ENCODE measurements at regions of chr10 and their contacts with region 1.

Region 1: DNA sequence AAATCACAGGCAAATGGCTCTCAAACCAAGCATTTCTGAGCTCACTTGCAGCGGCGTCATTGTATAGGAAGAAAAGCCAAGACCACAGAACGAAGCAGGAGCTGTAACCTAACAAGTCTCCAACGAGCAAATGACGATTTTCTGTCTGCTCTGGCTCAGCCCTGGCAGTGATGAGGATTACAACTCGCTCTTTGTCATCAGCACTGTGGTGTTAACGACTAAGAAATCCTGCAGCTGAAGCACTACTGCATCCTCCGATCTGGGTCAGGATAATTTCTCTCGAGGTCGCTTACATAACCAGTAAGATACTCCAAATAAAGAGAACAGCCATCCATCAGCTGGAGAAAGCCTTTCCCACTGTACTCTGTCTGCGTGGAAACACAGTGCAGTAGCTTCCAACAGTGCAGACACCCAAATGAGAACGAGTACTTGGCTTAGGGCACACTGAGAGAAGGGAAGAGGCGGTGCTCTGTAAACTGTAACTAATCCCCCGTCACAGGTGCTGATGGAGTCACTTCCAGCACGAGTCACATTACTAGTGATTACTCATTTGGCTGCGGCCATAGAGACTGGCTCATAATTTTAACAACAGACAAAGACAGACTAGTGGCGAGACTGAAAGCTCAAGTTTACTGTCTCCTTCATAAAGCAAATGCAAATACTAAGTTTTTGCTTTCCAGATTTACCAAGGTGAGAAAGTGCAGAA is 135.8 kb downstream of the NRBF2 start:
- DNase-seq: peak; percentile 81
- H3K4me3 Mint-ChIP-seq: peak overlapping the region; percentile 95
- H3K27ac Mint-ChIP-seq: peak overlapping the region; percentile 98
- H3K4me1 Mint-ChIP-seq: peaks cover 31% of the 10 kb centered on the region
- H3K27me3 Mint-ChIP-seq: no peaks in the 10 kb centered on the region

Region 2: GRCh38 chr10:61903221-61903927 is 1365.6 kb before region 1 on chr10:
- intact Hi-C with region 1: loop called (anchors 5 kb)
- DNase-seq: peak; percentile 69
- H3K4me3 Mint-ChIP-seq: peak overlapping the region; percentile 97
- H3K27ac Mint-ChIP-seq: peak overlapping the region; percentile 95
- H3K4me1 Mint-ChIP-seq: peaks cover 60% of the 10 kb centered on the region
- H3K27me3 Mint-ChIP-seq: no peaks in the 10 kb centered on the region

Region 3: GRCh38 chr10:63133056-63133820 is 135.7 kb before region 1 on chr10 and contains the start of gene NRBF2:
- intact Hi-C with region 1: loop called (anchors 1 kb)
- DNase-seq: peak; percentile 97
- H3K4me3 Mint-ChIP-seq: peak within 1 kb of the TSS; percentile 91
- H3K27ac Mint-ChIP-seq: peak within 1 kb of the TSS; percentile 83
- H3K4me1 Mint-ChIP-seq: peaks cover 32% of the 10 kb centered on the region
- H3K27me3 Mint-ChIP-seq: peaks cover 3% of the 10 kb centered on the region
- total RNA-seq, gene NRBF2: 30.0 and 30.8 TPM in 2 replicates

Region 4: DNA sequence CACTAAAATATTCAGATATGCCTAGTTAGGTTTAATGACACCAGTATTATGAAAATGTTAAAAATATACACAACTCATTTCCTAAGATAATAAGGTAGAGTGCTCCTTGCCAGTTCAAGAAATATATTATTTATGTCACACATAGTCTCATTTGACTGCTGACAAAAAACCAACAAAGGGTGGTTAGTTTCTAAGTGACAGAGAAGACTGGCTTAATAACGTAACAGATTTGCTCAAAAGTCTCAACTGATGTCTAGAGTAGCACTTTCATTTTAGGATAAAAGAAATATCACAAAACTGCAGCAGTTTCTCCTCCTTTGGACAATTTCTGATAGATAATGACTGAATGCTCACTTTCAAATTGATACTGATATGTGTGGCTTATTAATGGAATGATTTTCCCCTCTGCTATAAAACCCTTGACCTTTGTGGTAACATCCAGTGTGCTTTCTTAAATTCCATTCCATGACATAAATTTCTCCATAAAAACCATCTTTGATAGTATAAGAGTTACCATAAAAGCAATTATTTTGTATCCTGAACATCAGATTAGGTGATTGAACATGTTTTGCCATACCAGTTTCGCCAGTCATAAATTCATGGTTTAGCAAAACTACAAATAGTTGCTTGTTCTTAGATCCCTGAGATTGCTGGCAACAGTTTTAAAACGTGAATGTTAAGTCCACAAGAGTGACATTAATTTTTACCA is 41.6 kb before region 1 on chr10:
- intact Hi-C with region 1: loop called (anchors 1 kb)
- DNase-seq: no peak
- H3K4me3 Mint-ChIP-seq: peak overlapping the region; percentile 61
- H3K27ac Mint-ChIP-seq: peak overlapping the region; percentile 79
- H3K4me1 Mint-ChIP-seq: peaks cover 34% of the 10 kb centered on the region
- H3K27me3 Mint-ChIP-seq: no peaks in the 10 kb centered on the region

Region 5: DNA sequence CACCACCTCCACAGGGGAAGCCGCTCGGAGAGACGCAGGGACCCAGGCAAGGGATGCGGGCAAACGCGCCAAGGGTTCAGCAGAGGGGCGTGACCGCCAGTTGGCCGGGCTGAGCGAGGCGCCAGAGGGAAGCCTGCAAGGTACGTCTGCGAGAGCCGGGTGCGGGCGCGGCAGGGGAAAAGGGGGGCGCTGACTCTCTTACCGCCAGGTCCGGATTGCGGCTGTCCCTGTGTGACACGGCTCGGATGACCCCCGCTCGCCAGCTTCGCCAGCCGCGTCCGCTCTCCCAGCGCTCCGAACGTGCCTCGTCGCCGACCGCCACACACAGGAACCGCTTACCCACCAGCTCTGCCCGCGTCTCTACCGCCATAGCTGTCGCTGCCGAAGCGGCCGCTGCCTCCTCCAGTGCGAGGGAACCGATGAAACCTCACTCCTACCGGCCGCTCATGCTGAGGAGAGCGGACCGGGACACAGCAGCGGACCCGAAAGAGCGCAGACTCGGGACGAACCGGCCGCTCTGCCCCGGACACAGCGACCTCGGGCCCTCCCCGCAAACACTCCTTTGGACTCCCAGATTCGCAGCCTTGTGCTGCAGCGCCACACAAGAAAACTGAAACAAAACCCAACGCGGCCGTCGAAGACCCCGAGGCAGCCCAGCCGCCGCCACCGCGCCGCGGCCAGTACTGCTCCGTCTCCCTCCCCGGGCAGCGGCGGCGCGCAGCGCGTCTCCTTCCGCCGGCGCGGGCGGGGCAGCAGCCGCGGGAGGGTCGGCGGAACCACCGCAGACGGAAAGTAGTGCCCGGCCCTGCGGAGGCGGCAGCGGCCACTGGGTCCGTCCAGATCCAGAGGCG is 196.6 kb after region 1 on chr10 and contains the start of gene JMJD1C:
- intact Hi-C with region 1: loop called (anchors 2 kb)
- DNase-seq: peak; percentile 47
- H3K4me3 Mint-ChIP-seq: peak within 1 kb of the TSS; percentile 90
- H3K27ac Mint-ChIP-seq: peak within 1 kb of the TSS; percentile 68
- H3K4me1 Mint-ChIP-seq: peaks cover 21% of the 10 kb centered on the region
- H3K27me3 Mint-ChIP-seq: peaks cover 28% of the 10 kb centered on the region
- total RNA-seq, gene JMJD1C: 47.3 and 48.0 TPM in 2 replicates

Region 6: GRCh38 chr10:63657761-63658160 is 388.8 kb after region 1 on chr10:
- intact Hi-C with region 1: no loop called
- DNase-seq: no peak
- H3K4me3 Mint-ChIP-seq: no peak overlapping the region
- H3K27ac Mint-ChIP-seq: no peak overlapping the region
- H3K4me1 Mint-ChIP-seq: no peaks in the 10 kb centered on the region
- H3K27me3 Mint-ChIP-seq: peaks cover 2% of the 10 kb centered on the region

Region 7: DNA sequence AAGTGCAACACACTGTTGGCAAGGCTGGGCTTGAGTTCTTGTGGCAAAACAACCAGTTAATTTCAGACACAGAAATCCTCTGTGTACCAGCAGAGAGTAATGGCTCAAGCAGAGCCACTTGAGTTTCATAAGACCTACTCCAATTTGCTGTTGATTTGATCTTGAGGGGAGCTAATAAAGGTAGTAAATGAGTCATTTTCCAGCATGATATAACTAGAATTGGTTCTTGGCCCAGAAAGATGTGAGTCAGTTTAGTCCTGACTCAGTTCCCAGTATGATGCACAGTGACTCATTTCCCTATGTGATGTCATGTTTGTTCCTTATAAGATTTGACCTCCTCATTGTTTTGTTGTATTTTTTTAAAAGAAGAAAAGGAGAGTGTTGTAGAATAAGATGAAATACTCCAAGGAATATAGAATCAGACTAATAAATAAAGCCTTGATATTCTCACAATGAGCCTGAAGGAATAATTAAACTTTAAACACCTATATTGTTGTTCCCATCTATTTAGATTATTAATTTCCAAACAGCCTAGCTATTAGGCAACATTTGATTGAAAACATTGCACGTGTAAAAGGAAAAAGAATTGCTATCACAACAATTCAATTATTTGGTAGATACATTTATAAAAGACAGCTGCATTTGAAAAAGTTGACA is 438.4 kb after region 1 on chr10:
- intact Hi-C with region 1: loop called (anchors 1 kb)
- DNase-seq: peak; percentile 19
- H3K4me3 Mint-ChIP-seq: peak overlapping the region; percentile 3
- H3K27ac Mint-ChIP-seq: peak overlapping the region; percentile 61
- H3K4me1 Mint-ChIP-seq: peaks cover 22% of the 10 kb centered on the region
- H3K27me3 Mint-ChIP-seq: no peaks in the 10 kb centered on the region

Measured in activated T-helper 1 cell treated with anti-CD3 and anti-CD28 coated beads, Interleukin-12 subunit alpha, Interleukin-12 subunit beta, Interleukin-2, Interleukin-4 antibody, amounts not matched to agents 30 ng/mL and 10 ng/mL and 1 ng/mL, durations not matched to agents 14 hours and 24 hours and 36 hours (primary cell).